ENCODE measurements at regions of chr6 and their contacts with region 1.

Region 1: GRCh38 chr6:136282906-136283305 is 6.7 kb downstream of the BCLAF1 start:
- DNase-seq: no peak
- ATAC-seq: peak; percentile 50; the same call in 1 of the 2 replicates
- H3K4me3 Mint-ChIP-seq: no peak overlapping the region
- H3K27ac Mint-ChIP-seq: peak overlapping the region; percentile 83
- H3K4me1 Mint-ChIP-seq: peaks cover 46% of the 10 kb centered on the region
- H3K27me3 Mint-ChIP-seq: no peaks in the 10 kb centered on the region
- CTCF ChIP-seq: no peak

Region 2: GRCh38 chr6:136587527-136587926 is 304.6 kb after region 1 on chr6:
- CTCF ChIA-PET with region 1: no interaction called
- POLR2A ChIA-PET with region 1: interaction called, 14 read pairs
- DNase-seq: no peak
- ATAC-seq: no peak; the same call in 1 of the 2 replicates
- H3K4me3 Mint-ChIP-seq: no peak overlapping the region
- H3K27ac Mint-ChIP-seq: no peak overlapping the region
- H3K4me1 Mint-ChIP-seq: peaks cover 46% of the 10 kb centered on the region
- H3K27me3 Mint-ChIP-seq: peaks cover 4% of the 10 kb centered on the region; the same call in 1 of the 2 replicates
- CTCF ChIP-seq: no peak

Measured in WTC11 (cell line).